Transverse colon (tissue), 4 donors: ENCODE measurements at regions of chr7 and their contacts with region 1.

Region 1: GRCh38 chr7:92717993-92718716 is 118.2 kb downstream of the CDK6 start:
- DNase-seq: peak; percentile 55
- H3K4me3 ChIP-seq: peak overlapping the region; percentile 5 to 48 (median 44)
- H3K27ac ChIP-seq: peak overlapping the region; percentile 82 to 91 (median 86)
- H3K4me1 ChIP-seq: peaks cover 0 to 29% (median 19%) of the 10 kb centered on the region in 4 donors
- H3K27me3 ChIP-seq: no peaks in the 10 kb centered on the region
- CTCF ChIP-seq: no peak
- EP300 ChIP-seq: no peak
- POLR2A ChIP-seq: peak; percentile 33

Region 2: GRCh38 chr7:92674127-92674778 is 43.9 kb before region 1 on chr7:
- in situ Hi-C with region 1: no loop called
- intact Hi-C with region 1: no loop called
- DNase-seq: no peak
- H3K4me3 ChIP-seq: no peak overlapping the region
- H3K27ac ChIP-seq: no peak overlapping the region
- H3K4me1 ChIP-seq: no peaks in the 10 kb centered on the region
- H3K27me3 ChIP-seq: no peaks in the 10 kb centered on the region
- CTCF ChIP-seq: no peak
- EP300 ChIP-seq: no peak
- POLR2A ChIP-seq: no peak

Region 3: GRCh38 chr7:92768501-92769393 is 50.6 kb after region 1 on chr7:
- in situ Hi-C with region 1: no loop called
- intact Hi-C with region 1: loop called (anchors 10 kb)
- DNase-seq: no peak
- H3K4me3 ChIP-seq: no peak overlapping the region
- H3K27ac ChIP-seq: peak overlapping the region in 3 of 4 donors; percentile 31 to 69 (median 46)
- H3K4me1 ChIP-seq: peaks cover 0 to 37% (median 19%) of the 10 kb centered on the region in 4 donors
- H3K27me3 ChIP-seq: no peaks in the 10 kb centered on the region
- CTCF ChIP-seq: no peak
- EP300 ChIP-seq: no peak
- POLR2A ChIP-seq: no peak

Region 4: GRCh38 chr7:92809397-92810241 is 91.5 kb after region 1 on chr7:
- in situ Hi-C with region 1: no loop called
- intact Hi-C with region 1: no loop called
- DNase-seq: peak; percentile 81
- H3K4me3 ChIP-seq: no peak overlapping the region
- H3K27ac ChIP-seq: peak overlapping the region; percentile 42 to 78 (median 72)
- H3K4me1 ChIP-seq: peaks cover 5 to 50% (median 17%) of the 10 kb centered on the region in 4 donors
- H3K27me3 ChIP-seq: no peaks in the 10 kb centered on the region
- CTCF ChIP-seq: no peak
- EP300 ChIP-seq: no peak
- POLR2A ChIP-seq: no peak

Region 5: GRCh38 chr7:93194386-93194785 is 476.2 kb after region 1 on chr7:
- in situ Hi-C with region 1: no loop called
- intact Hi-C with region 1: no loop called
- DNase-seq: no peak
- H3K4me3 ChIP-seq: no peak overlapping the region
- H3K27ac ChIP-seq: no peak overlapping the region
- H3K4me1 ChIP-seq: peaks cover 0 to 6% (median 0%) of the 10 kb centered on the region in 4 donors
- H3K27me3 ChIP-seq: peaks cover 31% of the 10 kb centered on the region
- CTCF ChIP-seq: no peak
- EP300 ChIP-seq: no peak
- POLR2A ChIP-seq: no peak